HEK293T (cell line): ENCODE measurements at regions of chr1 and their contacts with region 1.

Region 1: DNA sequence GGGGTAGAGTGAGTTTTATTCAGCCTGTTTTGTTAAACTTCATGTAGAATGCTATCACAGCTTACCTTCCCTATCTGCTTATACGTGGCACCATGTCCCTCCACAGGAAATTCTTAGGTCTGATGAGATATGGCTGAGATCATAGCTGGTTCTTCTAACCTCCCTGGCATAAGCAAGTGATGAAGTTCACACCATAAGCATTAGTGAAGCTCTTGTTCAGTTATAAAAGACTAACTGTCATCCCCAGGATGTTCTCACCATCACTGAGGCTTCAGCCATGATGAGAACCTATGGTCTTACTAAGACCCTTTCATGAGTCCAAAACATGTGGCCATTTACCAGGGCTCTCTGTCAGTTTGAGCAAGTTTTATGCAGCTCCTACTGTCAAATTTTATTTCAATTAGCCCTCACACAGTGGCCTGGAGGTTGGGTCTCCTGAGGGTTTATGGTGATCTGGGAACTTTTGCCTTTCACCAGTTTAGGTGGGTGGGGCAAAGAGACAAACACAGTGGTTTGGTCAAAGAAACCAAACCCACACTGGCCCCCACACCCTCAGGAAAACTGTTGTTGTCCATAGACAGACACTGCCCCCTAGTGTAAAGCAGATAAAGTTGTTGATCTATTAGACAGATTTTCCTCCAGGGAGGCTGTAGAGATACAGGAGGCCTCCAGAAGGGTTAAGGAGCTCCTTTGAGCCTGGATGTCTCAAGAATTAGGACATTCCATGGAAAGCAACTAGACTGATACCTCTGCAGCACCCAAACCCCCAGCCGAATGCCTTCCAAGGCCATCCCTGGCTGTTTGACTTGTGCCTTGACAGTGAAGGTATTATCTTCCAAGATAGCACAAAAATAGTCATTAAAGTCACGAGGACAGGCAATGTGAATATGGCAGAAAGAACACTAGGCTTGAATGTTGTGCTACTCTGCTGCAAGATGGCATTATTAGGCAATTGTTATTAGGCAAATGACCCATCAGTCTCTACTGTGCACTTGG is 5.0 kb downstream of the SLC22A15 start:
- DNase-seq: peak; percentile 73

Region 2: GRCh38 chr1:115158181-115158580 is 823.1 kb before region 1 on chr1:
- CTCF ChIA-PET with region 1: no interaction called
- POLR2A ChIA-PET with region 1: no interaction called
- DNase-seq: no peak

Region 3: DNA sequence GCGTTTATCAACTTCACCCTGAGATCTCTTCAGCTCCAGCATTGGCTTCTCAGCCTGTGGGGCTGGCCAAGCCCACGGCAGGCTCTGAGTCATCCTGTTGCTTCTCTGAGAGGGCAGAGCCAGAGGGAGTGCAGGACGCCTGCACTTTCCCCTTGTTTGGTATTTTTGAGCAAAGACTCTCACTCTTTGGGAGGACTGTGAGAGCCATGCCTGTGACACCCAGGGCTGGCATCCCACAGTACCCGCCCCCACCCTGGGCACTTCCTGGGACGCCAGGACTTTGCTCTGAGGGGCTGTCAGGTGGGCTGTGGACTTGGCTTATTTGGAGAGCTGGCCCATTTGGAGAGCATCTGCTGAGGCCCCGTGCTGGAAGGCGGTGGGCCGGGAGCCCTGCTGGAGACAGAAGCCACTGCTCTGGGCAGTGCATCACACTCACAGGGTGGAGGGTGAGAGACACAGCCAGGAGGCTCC is 302.1 kb before region 1 on chr1:
- CTCF ChIA-PET with region 1: no interaction called
- POLR2A ChIA-PET with region 1: no interaction called
- DNase-seq: no peak

Region 4: DNA sequence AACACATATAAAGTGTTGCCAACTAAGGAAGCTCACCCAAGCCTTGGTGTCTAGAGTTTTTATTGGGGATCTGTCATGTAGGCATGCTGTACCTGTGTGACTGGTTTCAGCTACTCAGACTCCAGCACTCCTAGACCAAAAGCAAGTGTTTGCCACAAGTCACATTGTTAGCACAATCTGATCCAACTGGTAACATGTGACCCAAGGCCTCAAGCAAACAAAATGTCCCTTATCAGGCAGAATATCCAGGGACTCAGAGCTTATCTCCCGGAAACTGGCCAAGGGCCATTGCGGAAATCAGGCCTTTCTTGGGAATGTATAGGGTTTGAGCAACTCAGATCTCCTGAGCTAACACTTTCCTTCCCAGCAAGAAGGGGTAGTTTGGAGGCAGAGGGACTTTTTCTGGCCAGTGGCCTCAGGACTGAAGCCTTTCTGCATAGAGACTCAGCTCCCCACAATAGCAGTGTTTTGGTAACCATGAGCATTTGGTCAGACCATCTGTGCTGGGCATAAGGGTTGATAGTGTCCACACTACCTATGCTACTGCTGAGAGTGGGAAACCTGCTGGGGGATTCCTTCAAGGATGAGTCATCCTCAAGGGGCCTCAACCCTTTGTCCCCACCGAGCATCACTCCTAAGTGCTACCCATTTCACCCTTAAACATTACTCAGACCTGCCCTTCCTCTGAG is 170.0 kb before region 1 on chr1:
- CTCF ChIA-PET with region 1: interaction called, 10 read pairs
- POLR2A ChIA-PET with region 1: no interaction called
- DNase-seq: no peak

Region 5: DNA sequence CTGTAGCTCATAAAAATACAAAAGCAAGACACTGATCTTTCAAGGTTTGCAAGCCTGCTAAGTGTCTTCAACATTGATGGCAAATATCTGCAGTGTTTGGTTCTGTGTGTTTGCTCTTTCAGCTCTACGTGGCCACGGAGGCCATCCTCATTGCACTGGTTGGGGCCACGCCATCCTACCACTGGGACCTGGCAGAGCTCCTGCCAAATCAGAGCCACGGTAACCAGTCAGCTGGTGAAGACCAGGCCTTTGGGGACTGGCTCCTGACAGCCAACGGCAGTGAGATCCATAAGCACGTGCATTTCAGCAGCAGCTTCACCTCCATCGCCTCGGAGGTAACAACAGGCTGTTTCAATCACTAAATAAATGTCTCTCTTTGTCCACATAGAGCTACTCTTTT is 10.6 kb after region 1 on chr1:
- CTCF ChIA-PET with region 1: interaction called, 10 read pairs
- POLR2A ChIA-PET with region 1: no interaction called
- DNase-seq: no peak

Region 6: DNA sequence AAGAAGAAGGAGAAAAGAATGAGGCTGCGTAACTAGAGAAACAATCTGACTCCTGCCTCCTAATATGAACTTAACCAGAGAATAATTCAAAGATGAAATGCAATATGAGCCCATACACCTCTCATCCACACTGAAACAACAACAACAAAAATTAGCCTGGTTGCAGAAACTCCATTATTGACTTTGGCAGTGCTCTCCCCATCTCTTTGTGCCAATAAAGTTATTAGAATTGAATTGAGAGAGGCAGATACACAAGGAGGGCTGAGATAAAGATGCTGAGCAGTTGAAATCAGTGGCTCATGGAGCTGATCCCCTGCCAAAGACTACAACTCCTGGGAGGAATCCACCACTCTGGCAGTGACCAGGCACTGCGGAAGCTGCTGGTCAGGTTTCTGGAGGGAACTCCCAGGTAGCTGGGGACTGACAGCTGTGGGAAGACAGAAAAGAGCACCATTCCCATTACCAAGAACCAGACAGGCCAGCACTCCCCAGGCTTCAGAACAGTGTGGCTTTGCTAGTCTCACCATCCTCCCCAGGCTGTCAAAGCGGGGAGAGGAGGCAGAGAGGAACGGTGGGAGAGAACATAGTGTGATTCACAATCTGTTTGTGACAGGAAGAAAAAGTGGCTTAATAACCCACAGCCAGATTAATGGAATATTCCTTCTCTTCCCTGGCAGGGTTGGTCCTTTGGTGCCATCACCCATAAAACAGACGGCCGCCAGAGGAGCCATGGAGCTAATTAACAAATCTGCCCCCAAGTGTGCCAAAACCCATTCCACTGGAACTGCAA is 221.8 kb after region 1 on chr1:
- CTCF ChIA-PET with region 1: no interaction called
- POLR2A ChIA-PET with region 1: no interaction called
- DNase-seq: no peak